Right cardiac atrium (tissue), 5 donors: ENCODE measurements at regions of chr4 and their contacts with region 1.

Region 1: GRCh38 chr4:138035781-138036258 is 206.3 kb downstream of the SLC7A11 start:
- DNase-seq: no peak
- ATAC-seq: peak; percentile 75 to 81
- H3K4me3 ChIP-seq: no peak overlapping the region
- H3K27ac ChIP-seq: no peak overlapping the region
- H3K4me1 ChIP-seq: no peaks in the 10 kb centered on the region
- H3K27me3 ChIP-seq: no peaks in the 10 kb centered on the region

Region 2: DNA sequence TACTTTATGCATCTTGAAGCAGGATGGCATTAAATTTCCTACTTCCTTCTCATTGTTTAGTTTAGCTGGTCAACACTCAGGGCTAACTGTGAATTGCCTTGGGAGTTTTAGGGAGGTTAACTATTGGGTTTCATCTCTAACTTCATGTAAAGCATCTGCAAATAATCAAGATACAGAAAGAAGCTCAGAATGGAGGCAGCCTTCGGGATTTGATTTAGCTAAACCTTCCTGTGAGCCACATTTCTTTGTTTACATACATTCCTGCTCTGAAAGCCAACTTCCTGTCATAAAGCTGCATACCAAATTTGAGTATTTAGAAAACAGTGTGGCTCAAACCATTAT is 371.8 kb before region 1 on chr4:
- intact Hi-C with region 1: no loop called
- DNase-seq: no peak
- ATAC-seq: no peak
- H3K4me3 ChIP-seq: no peak overlapping the region
- H3K27ac ChIP-seq: no peak overlapping the region
- H3K4me1 ChIP-seq: no peaks in the 10 kb centered on the region
- H3K27me3 ChIP-seq: no peaks in the 10 kb centered on the region

Region 3: GRCh38 chr4:137952116-137952515 is 83.7 kb before region 1 on chr4:
- intact Hi-C with region 1: no loop called
- DNase-seq: no peak
- ATAC-seq: no peak
- H3K4me3 ChIP-seq: no peak overlapping the region
- H3K27ac ChIP-seq: no peak overlapping the region
- H3K4me1 ChIP-seq: no peaks in the 10 kb centered on the region
- H3K27me3 ChIP-seq: no peaks in the 10 kb centered on the region

Region 4: DNA sequence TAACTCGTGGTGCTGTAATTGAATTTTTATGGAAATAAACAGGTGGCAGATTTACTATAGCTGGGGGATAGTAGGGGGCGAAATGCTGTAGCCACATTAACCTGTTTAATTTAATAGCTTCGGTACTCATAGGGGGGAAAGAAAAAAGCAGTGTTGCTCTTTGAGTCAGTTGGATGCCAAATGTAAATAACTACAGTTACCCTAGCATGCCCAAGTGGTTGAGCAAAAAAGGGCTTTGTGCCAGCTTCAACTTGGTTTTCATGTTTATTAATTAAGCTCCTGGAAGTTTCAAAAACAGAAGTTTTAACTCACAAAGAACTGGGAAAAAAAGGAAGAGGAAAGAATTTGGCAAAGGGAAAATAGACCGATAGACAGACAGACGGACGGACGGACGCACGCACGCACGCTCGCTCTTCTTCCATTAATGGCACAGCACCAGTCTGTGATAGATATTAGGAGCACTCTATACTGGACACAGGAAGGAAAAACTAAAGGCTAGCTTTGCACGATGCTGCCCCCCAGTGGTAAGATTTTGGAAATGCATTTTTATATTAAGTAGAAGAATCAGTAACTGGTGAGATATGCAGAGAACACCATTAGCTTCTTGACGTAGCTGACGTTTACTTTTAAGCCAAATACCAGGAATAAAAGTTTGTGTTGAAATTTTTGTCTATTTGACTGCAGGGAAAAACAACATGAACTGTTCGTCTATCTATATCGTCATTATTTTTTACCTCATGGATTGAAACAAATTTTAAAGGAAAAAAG is 54.5 kb after region 1 on chr4:
- intact Hi-C with region 1: loop called in 1 of 4 experiments (anchors 2 kb)
- DNase-seq: peak in 1 of 3 donors; percentile 46
- ATAC-seq: peak; percentile 83 to 85
- H3K4me3 ChIP-seq: no peak overlapping the region
- H3K27ac ChIP-seq: no peak overlapping the region
- H3K4me1 ChIP-seq: no peaks in the 10 kb centered on the region
- H3K27me3 ChIP-seq: no peaks in the 10 kb centered on the region

Region 5: DNA sequence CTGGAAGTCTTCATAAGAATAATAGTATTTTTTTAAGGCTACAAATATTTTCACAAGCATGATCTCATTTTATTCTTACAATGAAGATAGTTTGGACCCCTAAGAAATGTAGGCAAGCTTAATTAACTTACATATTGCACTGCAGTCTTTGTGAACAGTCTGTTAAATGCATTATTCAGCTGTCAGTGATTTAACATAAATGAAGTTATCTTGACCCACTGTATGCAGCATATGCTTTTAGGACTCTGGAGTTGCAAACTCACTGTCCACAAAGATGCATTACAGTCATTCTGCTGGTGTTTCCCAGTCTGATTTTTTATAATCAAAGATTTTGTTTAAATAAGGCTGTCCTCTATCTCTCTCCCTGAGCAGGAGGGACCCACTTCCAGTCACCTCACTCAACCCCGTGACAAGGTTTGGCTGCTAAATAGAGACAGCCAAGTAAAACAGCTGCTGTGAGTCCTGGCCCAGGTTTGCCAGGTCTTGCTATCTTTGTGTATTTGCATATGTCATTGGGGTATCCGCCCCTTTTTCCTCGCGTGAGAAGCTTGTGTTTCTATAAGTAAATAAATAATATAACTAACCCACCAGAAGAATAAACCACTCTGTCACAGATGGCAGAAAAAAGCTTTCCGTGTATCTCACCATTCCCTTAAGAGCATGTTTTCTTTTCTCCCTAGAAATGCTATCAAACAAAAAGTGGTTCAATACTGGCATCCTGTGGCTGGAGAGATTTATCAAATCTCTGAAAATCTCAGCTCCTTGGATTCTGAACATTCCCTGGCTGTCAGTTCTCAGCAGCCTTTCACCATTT is 139.4 kb after region 1 on chr4:
- intact Hi-C with region 1: loop called in 2 of 4 experiments (anchors 10 kb)
- DNase-seq: peak in 2 of 3 donors; percentile 13 to 32
- ATAC-seq: peak; percentile 74
- H3K4me3 ChIP-seq: no peak overlapping the region
- H3K27ac ChIP-seq: no peak overlapping the region
- H3K4me1 ChIP-seq: no peaks in the 10 kb centered on the region
- H3K27me3 ChIP-seq: no peaks in the 10 kb centered on the region

Region 6: DNA sequence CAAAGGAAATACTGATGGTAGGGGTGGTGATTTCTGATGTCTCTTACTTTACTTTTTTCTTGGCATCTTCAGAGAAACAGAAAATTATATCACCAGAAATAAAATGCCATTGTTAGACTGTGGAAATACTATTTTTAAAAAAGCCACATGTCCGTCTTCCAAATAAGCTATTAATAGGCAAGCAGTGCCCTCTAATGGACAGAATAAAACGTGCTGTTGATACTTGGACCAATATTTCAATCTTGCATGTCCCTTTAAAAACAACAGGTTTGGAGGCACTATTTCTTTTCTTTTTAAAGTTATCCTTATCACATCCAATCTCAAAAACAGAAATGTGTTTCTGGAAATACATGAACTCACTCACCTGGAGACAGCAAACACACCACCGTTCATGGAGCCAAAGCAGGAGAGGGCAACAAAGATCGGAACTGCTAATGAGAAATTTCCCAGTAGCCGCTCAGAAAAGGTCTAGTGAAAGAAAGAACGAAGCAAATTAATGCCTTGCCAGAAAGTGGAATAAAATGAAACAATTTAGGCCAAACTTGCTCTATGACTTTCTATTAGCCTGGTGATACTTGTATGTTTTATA is 147.1 kb after region 1 on chr4:
- intact Hi-C with region 1: loop called in 2 of 4 experiments (anchors 10 kb)
- DNase-seq: no peak
- ATAC-seq: peak in 1 of 2 donors; percentile 49
- H3K4me3 ChIP-seq: no peak overlapping the region
- H3K27ac ChIP-seq: no peak overlapping the region
- H3K4me1 ChIP-seq: peaks cover 6% of the 10 kb centered on the region
- H3K27me3 ChIP-seq: no peaks in the 10 kb centered on the region

Region 7: GRCh38 chr4:138680989-138681604 is 645.3 kb after region 1 on chr4:
- intact Hi-C with region 1: loop called in 3 of 4 experiments (anchors 5 to 10 kb)
- DNase-seq: peak; percentile 76 to 85 (median 81)
- ATAC-seq: peak; percentile 71 to 73
- H3K4me3 ChIP-seq: no peak overlapping the region
- H3K27ac ChIP-seq: no peak overlapping the region
- H3K4me1 ChIP-seq: no peaks in the 10 kb centered on the region
- H3K27me3 ChIP-seq: no peaks in the 10 kb centered on the region

Region 8: GRCh38 chr4:138870737-138871554 is 835.1 kb after region 1 on chr4:
- intact Hi-C with region 1: loop called in 1 of 4 experiments (anchors 5 kb)
- DNase-seq: peak in 2 of 3 donors; percentile 26 to 45
- ATAC-seq: peak; percentile 63 to 74
- H3K4me3 ChIP-seq: no peak overlapping the region
- H3K27ac ChIP-seq: no peak overlapping the region
- H3K4me1 ChIP-seq: no peaks in the 10 kb centered on the region
- H3K27me3 ChIP-seq: no peaks in the 10 kb centered on the region